ENCODE measurements at regions of chr11 and their contacts with region 1.

Region 1: DNA sequence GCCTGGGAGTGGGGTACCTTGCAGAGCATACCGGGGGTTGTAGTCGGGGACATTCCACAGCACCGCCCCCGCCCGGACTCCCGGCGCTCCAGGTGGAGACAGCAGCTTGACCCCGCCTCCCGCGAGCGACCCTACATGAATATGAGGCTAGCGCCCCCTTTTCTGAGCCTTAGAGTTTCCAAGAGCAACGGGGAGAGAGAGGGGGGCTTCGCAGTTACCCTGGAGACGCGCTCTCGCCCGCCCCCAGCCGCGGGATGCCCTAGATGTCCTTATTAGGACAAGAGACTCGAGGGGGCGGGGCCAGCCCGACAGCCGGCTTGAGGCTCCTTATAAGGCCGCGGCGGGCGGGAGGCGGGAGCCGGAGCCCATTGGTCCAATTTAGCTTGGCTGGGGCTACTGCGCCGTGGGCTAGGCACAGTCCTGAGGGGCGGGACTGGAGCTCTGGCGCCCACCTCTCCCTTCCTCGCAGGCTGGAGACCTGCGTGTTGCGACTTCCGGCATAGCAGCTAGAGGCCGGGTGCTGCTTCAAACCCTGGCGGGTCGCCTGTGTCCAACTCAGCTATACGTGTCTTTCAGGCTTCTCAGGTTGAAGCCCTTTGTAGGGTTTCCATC is 927 bp upstream of the MUS81 start:
- DNase-seq: peak; percentile 93
- H3K4me3 ChIP-seq: peak overlapping the region; percentile 76 to 97 (median 84)
- H3K27ac ChIP-seq: peak overlapping the region; percentile 70
- H3K4me1 ChIP-seq: peaks cover 35% of the 10 kb centered on the region
- H3K27me3 ChIP-seq: no peaks in the 10 kb centered on the region
- CTCF ChIP-seq: no peak

Region 2: GRCh38 chr11:65623852-65624616 is 235.3 kb before region 1 on chr11:
- CTCF ChIA-PET with region 1: no interaction called
- dilution Hi-C with region 1: no loop called
- in situ Hi-C with region 1: no loop called
- intact Hi-C with region 1: no loop called
- DNase-seq: no peak
- H3K4me3 ChIP-seq: no peak overlapping the region
- H3K27ac ChIP-seq: no peak overlapping the region
- H3K4me1 ChIP-seq: no peaks in the 10 kb centered on the region
- H3K27me3 ChIP-seq: no peaks in the 10 kb centered on the region
- CTCF ChIP-seq: no peak

Region 3: GRCh38 chr11:65637794-65638317 is 221.4 kb before region 1 on chr11 and contains the start of gene SIPA1:
- CTCF ChIA-PET with region 1: no interaction called
- dilution Hi-C with region 1: loop called (anchors 5 kb)
- in situ Hi-C with region 1: no loop called
- intact Hi-C with region 1: no loop called
- DNase-seq: peak; percentile 73
- H3K4me3 ChIP-seq: peak within 1 kb of the TSS; percentile 65 to 73 (median 72)
- H3K27ac ChIP-seq: peak within 1 kb of the TSS; percentile 20
- H3K4me1 ChIP-seq: peaks cover 11% of the 10 kb centered on the region
- H3K27me3 ChIP-seq: no peaks in the 10 kb centered on the region
- CTCF ChIP-seq: peak in 1 of 2 donors; percentile 36
- total RNA-seq, gene SIPA1: 13.2 to 16.1 TPM

Region 4: GRCh38 chr11:65833297-65834030 is 25.8 kb before region 1 on chr11 and contains the start of gene SNX32:
- CTCF ChIA-PET with region 1: no interaction called
- dilution Hi-C with region 1: loop called (anchors 5 kb)
- in situ Hi-C with region 1: no loop called
- intact Hi-C with region 1: loop called (anchors 1 kb)
- DNase-seq: peak; percentile 84
- H3K4me3 ChIP-seq: peak within 1 kb of the TSS; percentile 22 to 51 (median 43)
- H3K27ac ChIP-seq: no peak within 1 kb of the TSS
- H3K4me1 ChIP-seq: peaks cover 16% of the 10 kb centered on the region
- H3K27me3 ChIP-seq: peaks cover 7% of the 10 kb centered on the region
- CTCF ChIP-seq: no peak
- total RNA-seq, gene SNX32: 0.85 to 1.5 TPM

Region 5: DNA sequence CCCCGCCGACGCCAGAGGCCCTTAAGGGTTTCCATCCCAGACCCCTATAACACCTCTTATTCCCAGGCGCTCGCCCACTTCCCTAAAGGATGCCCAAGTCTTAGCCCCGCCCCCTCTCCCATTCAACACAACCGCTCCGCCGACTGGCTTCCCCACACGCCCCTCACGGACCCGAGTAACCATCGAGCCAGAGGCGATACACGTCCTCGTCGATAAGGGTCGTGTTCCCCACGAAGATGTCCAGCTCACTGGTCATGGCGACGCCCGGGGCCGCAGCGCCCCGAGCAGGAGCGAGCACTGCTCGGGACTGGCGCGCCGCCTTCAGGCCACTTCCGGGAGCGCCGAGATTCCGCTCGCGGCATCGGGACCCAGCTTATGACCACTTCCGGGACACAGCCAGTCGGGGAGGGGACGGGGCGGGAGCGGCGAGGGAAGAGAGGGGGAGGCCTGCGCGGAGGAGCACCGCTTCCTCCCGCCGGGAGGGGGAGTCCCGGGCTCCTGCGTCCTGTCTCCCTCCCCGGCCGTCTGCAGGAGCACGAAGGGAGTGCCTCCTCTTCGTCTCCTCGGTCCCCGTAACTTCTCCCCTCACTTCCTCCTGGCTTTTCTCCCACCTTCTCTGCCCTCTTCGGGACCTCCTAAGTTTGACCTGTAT is 29.0 kb after region 1 on chr11 and contains the start of gene FIBP:
- CTCF ChIA-PET with region 1: interaction called, 25 read pairs
- dilution Hi-C with region 1: no loop called
- in situ Hi-C with region 1: no loop called
- intact Hi-C with region 1: loop called (anchors 1 kb)
- DNase-seq: peak; percentile 95
- H3K4me3 ChIP-seq: peak within 1 kb of the TSS; percentile 78 to 89 (median 80)
- H3K27ac ChIP-seq: peak within 1 kb of the TSS; percentile 70
- H3K4me1 ChIP-seq: peaks cover 56% of the 10 kb centered on the region
- H3K27me3 ChIP-seq: no peaks in the 10 kb centered on the region
- CTCF ChIP-seq: peak; percentile 30 to 80
- total RNA-seq, gene FIBP: 84.1 to 125 TPM

Region 6: DNA sequence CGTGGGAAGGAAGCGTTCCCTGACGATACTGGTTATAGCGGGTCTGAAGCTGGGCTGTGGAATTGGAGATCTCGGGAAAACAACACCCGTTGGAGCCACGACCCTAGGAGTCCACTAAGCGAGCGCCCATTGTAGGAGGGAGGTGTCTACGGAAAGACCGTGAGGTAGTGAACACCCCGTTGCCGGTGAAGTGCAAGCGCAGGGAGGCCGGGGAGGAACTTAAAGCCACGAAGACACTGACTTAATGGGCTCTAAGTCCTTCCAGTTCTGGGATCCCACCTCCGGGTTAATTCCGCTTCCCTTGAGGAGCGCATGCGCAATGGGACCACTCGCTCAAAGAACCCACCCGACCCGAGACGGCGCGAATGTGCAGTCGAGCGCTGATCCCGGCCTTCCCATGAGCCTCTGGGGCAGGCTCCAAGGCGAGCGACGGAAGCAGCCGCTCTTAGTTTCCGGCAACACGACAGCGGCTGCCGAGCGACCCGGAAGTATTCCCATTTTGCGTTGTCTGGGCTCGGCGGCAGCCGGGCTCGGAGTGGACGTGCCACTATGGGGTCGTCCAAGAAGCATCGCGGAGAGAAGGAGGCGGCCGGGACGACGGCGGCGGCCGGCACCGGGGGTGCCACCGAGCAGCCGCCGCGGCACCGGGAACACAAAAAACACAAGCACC is 102.1 kb after region 1 on chr11 and contains the start of gene SART1:
- CTCF ChIA-PET with region 1: no interaction called
- dilution Hi-C with region 1: no loop called
- in situ Hi-C with region 1: no loop called
- intact Hi-C with region 1: loop called (anchors 2 kb)
- DNase-seq: peak; percentile 94
- H3K4me3 ChIP-seq: peak within 1 kb of the TSS; percentile 58 to 98 (median 65)
- H3K27ac ChIP-seq: peak within 1 kb of the TSS; percentile 71
- H3K4me1 ChIP-seq: peaks cover 10% of the 10 kb centered on the region
- H3K27me3 ChIP-seq: no peaks in the 10 kb centered on the region
- CTCF ChIP-seq: no peak
- total RNA-seq, gene SART1: 16.5 to 50.7 TPM